Ovary (tissue), 10 donors: ENCODE measurements at regions of chr15 and their contacts with region 1.

Region 1: DNA sequence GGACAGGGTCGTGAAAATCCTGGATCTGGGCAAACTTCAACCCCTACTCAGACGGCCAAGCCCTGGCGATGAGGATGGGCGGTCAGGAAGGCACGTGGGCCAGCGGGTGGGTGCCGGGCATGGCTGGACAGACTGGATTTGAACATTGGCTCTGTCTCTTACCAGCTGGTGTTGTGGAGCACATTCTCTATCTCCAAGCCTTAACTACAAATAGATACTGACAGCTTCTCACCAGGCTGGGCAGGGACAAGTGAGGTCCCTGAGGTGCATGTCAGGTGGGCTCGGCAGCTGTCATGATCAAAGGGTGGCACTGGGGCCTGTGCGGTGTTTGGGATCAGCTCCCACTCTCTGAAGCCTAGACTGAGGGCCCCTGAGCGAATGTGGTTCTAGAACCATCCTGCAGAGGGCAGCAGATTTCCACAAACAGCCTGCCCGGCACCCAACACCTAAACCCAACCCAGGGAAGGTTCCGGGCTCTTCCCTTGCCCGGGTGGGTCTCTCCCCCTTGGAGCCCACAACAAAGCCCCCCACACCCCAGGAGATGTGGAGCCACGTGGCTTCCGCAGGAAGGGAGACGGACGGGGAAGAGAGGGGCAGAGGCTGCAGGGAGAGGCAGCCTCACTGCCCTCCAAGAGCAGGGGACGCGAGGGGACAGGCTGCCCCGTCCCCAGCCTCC is 58.4 kb downstream of the RGMA start:
- DNase-seq: peak; percentile 69 to 85 (median 83)
- H3K4me3 ChIP-seq: no peak overlapping the region
- H3K27ac ChIP-seq: peak overlapping the region; percentile 35 to 81
- H3K4me1 ChIP-seq: peaks cover 18% of the 10 kb centered on the region
- H3K27me3 ChIP-seq: no peaks in the 10 kb centered on the region
- CTCF ChIP-seq: peak; percentile 86 to 93 (median 92)
- EP300 ChIP-seq: no peak
- POLR2A ChIP-seq: peak; percentile 23

Region 2: DNA sequence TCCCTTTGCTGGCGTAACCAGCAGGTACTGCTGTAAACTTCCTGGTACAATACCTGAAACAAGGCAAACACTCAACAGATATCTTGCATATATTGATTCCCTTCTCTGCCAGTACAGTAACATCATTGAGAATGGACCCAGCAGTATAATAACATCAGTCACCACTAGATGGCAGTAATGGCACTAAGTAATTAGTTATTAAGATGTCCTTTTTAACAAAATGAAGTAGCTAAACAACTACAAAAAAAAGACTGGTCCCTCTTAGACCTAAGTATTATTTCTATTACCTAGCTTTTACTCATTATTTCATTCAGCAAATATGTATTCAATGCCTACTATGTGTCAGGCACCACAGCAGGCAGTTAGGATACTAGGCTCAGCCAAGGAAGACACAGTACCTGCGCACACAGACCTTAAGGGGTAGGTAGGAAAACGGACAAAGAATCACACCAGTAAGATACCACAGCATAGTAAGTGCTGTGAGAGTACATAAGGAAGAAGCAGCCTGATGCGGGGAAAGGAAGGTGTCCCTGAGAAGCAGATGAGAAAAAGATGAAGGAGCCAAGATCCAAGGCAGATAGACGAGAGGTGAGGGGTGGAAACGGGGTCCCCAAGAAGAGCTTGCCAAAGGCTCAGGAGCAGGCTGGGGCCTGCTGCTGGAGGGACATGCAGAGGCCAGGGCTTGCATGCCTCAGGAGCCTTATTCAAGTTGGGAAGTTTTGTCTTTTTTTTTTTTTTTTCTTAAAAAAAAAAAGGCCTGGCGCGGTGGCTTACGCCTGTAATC is 233.2 kb before region 1 on chr15:
- intact Hi-C with region 1: loop called in 3 of 4 experiments (anchors 5 to 10 kb)
- DNase-seq: peak in 1 of 5 donors; percentile 37
- H3K4me3 ChIP-seq: no peak overlapping the region
- H3K27ac ChIP-seq: peak overlapping the region in 1 of 2 donors; percentile 39
- H3K4me1 ChIP-seq: peaks cover 6% of the 10 kb centered on the region
- H3K27me3 ChIP-seq: no peaks in the 10 kb centered on the region
- CTCF ChIP-seq: peak; percentile 67 to 83 (median 81)
- EP300 ChIP-seq: no peak
- POLR2A ChIP-seq: no peak

Region 3: DNA sequence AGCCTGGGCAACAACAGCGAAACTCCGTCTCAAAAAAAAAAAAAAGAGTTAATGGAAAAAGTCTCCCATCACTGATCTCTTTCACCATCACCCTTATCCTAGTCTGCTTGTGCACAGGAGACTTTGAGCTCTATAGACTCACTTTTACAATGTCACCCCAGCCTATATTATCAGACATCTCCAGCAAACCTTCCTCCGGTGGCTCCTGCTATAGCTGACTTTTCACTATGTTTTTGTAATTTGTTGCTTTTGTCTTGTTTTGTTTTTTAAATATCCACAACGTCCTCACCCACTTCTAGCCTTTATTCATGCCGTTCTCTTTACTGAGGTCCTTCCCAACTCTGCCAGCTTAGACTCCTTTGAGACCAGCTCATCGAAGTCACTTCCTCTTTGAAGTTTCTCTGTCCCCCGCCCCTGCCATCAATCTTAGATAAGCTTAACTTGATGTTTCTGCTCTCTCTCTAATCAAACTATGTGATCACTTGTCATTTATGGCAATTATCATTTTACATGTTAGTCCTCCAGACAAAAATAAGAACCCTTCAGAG is 213.2 kb before region 1 on chr15:
- intact Hi-C with region 1: no loop called
- DNase-seq: no peak
- H3K4me3 ChIP-seq: no peak overlapping the region
- H3K27ac ChIP-seq: no peak overlapping the region
- H3K4me1 ChIP-seq: peaks cover 2% of the 10 kb centered on the region
- H3K27me3 ChIP-seq: no peaks in the 10 kb centered on the region
- CTCF ChIP-seq: no peak
- EP300 ChIP-seq: no peak
- POLR2A ChIP-seq: no peak

Region 4: GRCh38 chr15:93048759-93049161 is 18.2 kb after region 1 on chr15:
- intact Hi-C with region 1: no loop called
- DNase-seq: no peak
- H3K4me3 ChIP-seq: no peak overlapping the region
- H3K27ac ChIP-seq: no peak overlapping the region
- H3K4me1 ChIP-seq: no peaks in the 10 kb centered on the region
- H3K27me3 ChIP-seq: no peaks in the 10 kb centered on the region
- CTCF ChIP-seq: no peak
- EP300 ChIP-seq: no peak
- POLR2A ChIP-seq: no peak

Region 5: DNA sequence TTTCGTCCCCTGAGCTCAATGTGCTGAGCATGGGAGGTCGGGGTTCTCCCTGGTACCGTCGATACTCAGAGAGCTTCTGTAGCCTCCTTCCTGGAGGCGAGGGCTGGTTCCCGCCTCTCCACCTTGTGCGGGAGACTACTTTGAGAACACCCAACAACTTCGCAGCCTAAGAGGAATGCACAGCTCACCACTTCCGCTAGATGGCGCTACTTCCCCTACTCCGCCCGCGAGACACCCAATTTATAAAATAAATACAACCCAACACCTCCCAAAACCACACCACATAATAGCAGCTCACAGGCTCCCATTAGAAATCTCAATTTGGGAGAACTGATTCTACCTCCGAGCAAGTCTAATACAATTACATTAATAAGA is 57.2 kb after region 1 on chr15:
- intact Hi-C with region 1: loop called in 2 of 4 experiments (anchors 5 kb)
- DNase-seq: peak; percentile 77 to 88 (median 86)
- H3K4me3 ChIP-seq: peak overlapping the region; percentile 68
- H3K27ac ChIP-seq: peak overlapping the region; percentile 40 to 79
- H3K4me1 ChIP-seq: peaks cover 6% of the 10 kb centered on the region
- H3K27me3 ChIP-seq: no peaks in the 10 kb centered on the region
- CTCF ChIP-seq: peak; percentile 82 to 93 (median 86)
- EP300 ChIP-seq: no peak
- POLR2A ChIP-seq: no peak

Region 6: GRCh38 chr15:93974804-93975481 is 944.4 kb after region 1 on chr15:
- intact Hi-C with region 1: loop called in 3 of 4 experiments (anchors 10 kb)
- DNase-seq: peak in 1 of 5 donors; percentile 31
- H3K4me3 ChIP-seq: no peak overlapping the region
- H3K27ac ChIP-seq: no peak overlapping the region
- H3K4me1 ChIP-seq: no peaks in the 10 kb centered on the region
- H3K27me3 ChIP-seq: no peaks in the 10 kb centered on the region
- CTCF ChIP-seq: no peak
- EP300 ChIP-seq: no peak
- POLR2A ChIP-seq: no peak

Region 7: GRCh38 chr15:94119923-94120775 is 1089.6 kb after region 1 on chr15:
- intact Hi-C with region 1: loop called (anchors 2 to 10 kb)
- DNase-seq: peak; percentile 60 to 83 (median 63)
- H3K4me3 ChIP-seq: no peak overlapping the region
- H3K27ac ChIP-seq: peak overlapping the region in 1 of 2 donors; percentile 61
- H3K4me1 ChIP-seq: no peaks in the 10 kb centered on the region
- H3K27me3 ChIP-seq: no peaks in the 10 kb centered on the region
- CTCF ChIP-seq: peak; percentile 91 to 99 (median 99)
- EP300 ChIP-seq: no peak
- POLR2A ChIP-seq: no peak